Activated naive CD4-positive, alpha-beta T cell treated with anti-CD3 and anti-CD28 coated beads, Interleukin-2, amount 10 ng/mL, durations not matched to agents 7 days and 5 days (primary cell): ENCODE measurements at regions of chr18 and their contacts with region 1.

Region 1: DNA sequence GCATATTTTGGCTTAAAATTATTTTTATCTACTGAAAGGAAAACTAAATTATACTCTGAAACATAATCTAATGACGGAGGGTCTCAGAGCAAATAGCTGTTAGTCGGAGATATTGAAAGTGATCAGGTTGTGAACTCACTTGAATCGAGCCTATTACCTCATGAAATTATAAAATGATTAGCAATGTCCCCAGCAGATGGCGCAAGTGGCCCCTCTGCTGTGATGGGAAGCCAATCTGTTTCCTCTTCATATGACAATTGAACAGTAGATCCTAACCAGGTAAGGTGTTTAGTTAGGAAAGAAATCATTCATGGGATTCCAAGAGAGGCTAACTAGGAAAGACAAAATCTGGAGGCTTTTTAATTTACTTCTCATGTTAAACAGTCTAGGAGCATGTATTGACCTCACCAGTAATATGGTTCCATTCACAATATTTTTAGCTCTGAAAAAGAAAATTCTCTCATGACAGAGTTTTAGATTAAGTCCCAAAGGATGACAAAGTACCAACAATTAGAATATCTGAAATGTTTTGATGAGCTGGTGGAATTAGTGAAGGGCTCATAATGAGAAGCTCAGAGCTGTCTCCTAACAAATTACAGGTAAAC is 29.9 kb upstream of the MPPE1 start:
- DNase-seq: peak; percentile 85
- H3K4me3 Mint-ChIP-seq: no peak overlapping the region
- H3K27ac Mint-ChIP-seq: no peak overlapping the region
- H3K4me1 Mint-ChIP-seq: no peaks in the 10 kb centered on the region
- H3K27me3 Mint-ChIP-seq: peaks cover 11% of the 10 kb centered on the region

Region 2: GRCh38 chr18:11925800-11926481 is 12.0 kb before region 1 on chr18:
- CTCF ChIA-PET with region 1: interaction called, 38 read pairs
- DNase-seq: no peak
- H3K4me3 Mint-ChIP-seq: no peak overlapping the region
- H3K27ac Mint-ChIP-seq: no peak overlapping the region
- H3K4me1 Mint-ChIP-seq: peaks cover 3% of the 10 kb centered on the region
- H3K27me3 Mint-ChIP-seq: peaks cover 11% of the 10 kb centered on the region

Region 3: GRCh38 chr18:11948831-11949523 is 11.0 kb after region 1 on chr18:
- CTCF ChIA-PET with region 1: interaction called, 10 read pairs
- DNase-seq: no peak
- H3K4me3 Mint-ChIP-seq: no peak overlapping the region
- H3K27ac Mint-ChIP-seq: no peak overlapping the region
- H3K4me1 Mint-ChIP-seq: peaks cover 16% of the 10 kb centered on the region
- H3K27me3 Mint-ChIP-seq: no peaks in the 10 kb centered on the region

Region 4: GRCh38 chr18:12038639-12039417 is 100.9 kb after region 1 on chr18:
- CTCF ChIA-PET with region 1: interaction called, 64 read pairs
- DNase-seq: peak; percentile 78
- H3K4me3 Mint-ChIP-seq: peak overlapping the region; percentile 44
- H3K27ac Mint-ChIP-seq: no peak overlapping the region
- H3K4me1 Mint-ChIP-seq: no peaks in the 10 kb centered on the region
- H3K27me3 Mint-ChIP-seq: peaks cover 40% of the 10 kb centered on the region